Kidney (tissue), 22 donors: ENCODE measurements at regions of chr19 and their contacts with region 1.

Region 1: GRCh38 chr19:14689598-14690503 is at the start of gene ZNF333:
- DNase-seq: peak; percentile 95 to 98 (median 97)
- H3K4me3 ChIP-seq: peak within 1 kb of the TSS; percentile 86 to 96 (median 93)
- H3K27ac ChIP-seq: peak within 1 kb of the TSS; percentile 97 to 98
- H3K4me1 ChIP-seq: peaks cover 0 to 9% (median 0%) of the 10 kb centered on the region in 3 donors
- H3K27me3 ChIP-seq: no peaks in the 10 kb centered on the region
- CTCF ChIP-seq: peak; percentile 11
- total RNA-seq, gene ZNF333: 20.8 TPM

Region 2: DNA sequence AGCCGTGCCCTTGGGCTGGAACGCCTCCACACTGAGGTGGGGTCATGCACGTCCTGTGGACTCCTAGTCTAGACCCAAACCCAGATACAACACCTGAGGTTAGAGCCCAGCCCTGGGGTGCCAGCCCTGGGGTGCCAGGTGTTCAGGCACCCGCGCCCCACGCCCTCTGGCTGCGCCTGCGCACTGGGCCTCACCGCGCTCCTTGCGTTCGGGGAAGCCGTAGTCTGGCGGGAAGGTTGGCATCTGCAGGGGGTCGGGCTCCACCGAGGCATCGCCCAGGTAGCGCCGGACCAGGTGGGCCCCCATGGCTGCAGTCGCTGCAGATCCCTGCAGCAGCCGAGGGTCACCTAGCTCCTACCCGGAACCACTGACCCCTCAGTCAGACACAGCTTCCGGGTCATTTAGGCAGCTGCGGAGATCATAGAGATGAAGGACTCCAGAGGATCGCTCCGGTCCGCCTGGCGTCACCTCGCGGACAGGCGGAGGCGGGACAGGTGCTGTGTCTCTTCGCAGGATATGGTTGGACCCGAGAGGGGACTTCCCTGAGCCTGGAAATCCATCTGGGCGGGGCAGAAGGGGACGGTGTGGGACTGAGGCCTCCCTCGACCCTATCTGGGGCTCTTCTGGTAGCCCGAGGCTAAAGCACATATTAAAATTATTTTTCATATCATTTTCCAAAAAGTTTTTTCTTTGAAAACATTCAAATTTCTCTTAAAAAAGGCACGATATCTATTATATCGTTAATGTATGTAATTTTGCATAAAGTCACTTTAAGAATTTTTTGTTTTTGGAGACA is 118.0 kb before region 1 on chr19 and contains the start of gene NDUFB7:
- intact Hi-C with region 1: loop called (anchors 10 kb)
- DNase-seq: peak; percentile 91 to 97 (median 94)
- H3K4me3 ChIP-seq: peak within 1 kb of the TSS; percentile 86 to 99 (median 95)
- H3K27ac ChIP-seq: peak within 1 kb of the TSS; percentile 48 to 77
- H3K4me1 ChIP-seq: peaks cover 0 to 13% (median 8%) of the 10 kb centered on the region in 3 donors
- H3K27me3 ChIP-seq: no peaks in the 10 kb centered on the region
- CTCF ChIP-seq: peak; percentile 66
- total RNA-seq, gene NDUFB7: 146 TPM